ENCODE measurements at regions of chr20 and their contacts with region 1.

Region 1: GRCh38 chr20:7859356-7859802 is 80.9 kb downstream of the HAO1 start:
- DNase-seq: peak; percentile 30
- H3K4me3 ChIP-seq: no peak overlapping the region; a peak in 1 of 4 replicates
- H3K27ac ChIP-seq: no peak overlapping the region
- H3K4me1 ChIP-seq: peaks cover 0 to 9% of the 10 kb centered on the region in 2 experiments; a peak in 3 of 4 replicates
- H3K27me3 ChIP-seq: no peaks in the 10 kb centered on the region
- CTCF ChIP-seq: peak; percentile 86
- EP300 ChIP-seq: no peak
- RAD21 ChIP-seq: peak; percentile 81

Region 2: DNA sequence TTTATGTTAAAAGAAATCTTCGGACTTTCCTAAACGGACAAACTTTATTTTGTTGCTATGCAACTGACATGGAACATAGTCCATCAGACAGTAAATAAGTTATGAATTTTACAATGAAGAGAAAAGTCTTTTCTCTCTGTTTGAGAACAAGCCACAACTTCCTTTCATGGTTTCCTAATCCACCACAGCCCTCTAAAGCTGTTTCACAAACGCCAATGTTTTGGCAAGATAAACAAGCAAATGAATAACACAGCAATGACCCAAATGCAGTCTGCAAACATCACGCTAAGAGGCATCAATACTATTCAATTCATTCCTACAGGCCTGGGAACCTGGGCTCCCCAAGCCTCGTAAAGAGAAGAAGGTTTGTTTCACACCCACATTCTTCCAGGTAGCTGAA is 20.5 kb after region 1 on chr20:
- CTCF ChIA-PET with region 1: interaction called, 18 read pairs
- POLR2A ChIA-PET with region 1: no interaction called
- DNase-seq: no peak
- H3K4me3 ChIP-seq: no peak overlapping the region
- H3K27ac ChIP-seq: no peak overlapping the region
- H3K4me1 ChIP-seq: no peaks in the 10 kb centered on the region
- H3K27me3 ChIP-seq: peaks cover 5% of the 10 kb centered on the region; the same call in 1 of the 2 replicates
- CTCF ChIP-seq: no peak
- EP300 ChIP-seq: no peak
- RAD21 ChIP-seq: no peak

Region 3: GRCh38 chr20:7924692-7925091 is 65.3 kb after region 1 on chr20:
- CTCF ChIA-PET with region 1: no interaction called
- POLR2A ChIA-PET with region 1: no interaction called
- DNase-seq: no peak
- H3K4me3 ChIP-seq: no peak overlapping the region
- H3K27ac ChIP-seq: no peak overlapping the region; a peak in 1 of 4 replicates
- H3K4me1 ChIP-seq: peaks cover 0 to 11% of the 10 kb centered on the region in 2 experiments; a peak in 1 of 4 replicates
- H3K27me3 ChIP-seq: no peaks in the 10 kb centered on the region
- CTCF ChIP-seq: no peak
- EP300 ChIP-seq: 0 out of 4 replicates have a peak, but pooled peaks of 1 of the 2 experiments have one; percentile 13
- RAD21 ChIP-seq: no peak

Region 4: DNA sequence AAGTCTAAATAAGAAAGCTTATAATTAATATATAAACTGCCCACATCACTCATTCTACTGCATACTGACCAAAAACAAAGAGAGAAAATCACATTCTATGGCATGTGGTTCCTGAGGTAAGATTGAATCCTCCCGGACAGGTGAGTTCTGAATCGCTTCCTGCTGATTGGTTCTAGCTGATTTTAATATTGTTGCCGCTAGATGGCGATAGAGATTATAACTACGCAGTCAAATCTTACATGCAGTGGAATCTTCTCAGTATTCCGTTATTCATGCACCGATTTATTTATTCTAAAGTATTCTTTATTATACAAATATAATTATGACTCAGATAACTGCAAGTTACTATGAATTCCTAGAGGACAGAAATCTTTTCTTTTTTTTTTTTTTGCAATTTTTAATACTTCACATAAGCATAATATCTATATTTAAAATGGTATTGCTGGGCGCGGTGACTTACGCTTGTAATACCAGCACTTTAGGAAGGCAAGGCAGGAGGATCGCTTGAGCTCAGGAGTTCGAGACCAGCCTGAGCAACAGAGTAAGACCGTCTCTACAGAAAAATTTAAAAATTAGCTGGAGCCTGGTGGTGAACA is 184.4 kb after region 1 on chr20:
- CTCF ChIA-PET with region 1: no interaction called
- POLR2A ChIA-PET with region 1: no interaction called
- DNase-seq: peak; percentile 44
- H3K4me3 ChIP-seq: no peak overlapping the region
- H3K27ac ChIP-seq: no peak overlapping the region
- H3K4me1 ChIP-seq: peaks cover 0 to 6% of the 10 kb centered on the region in 2 experiments; a peak in 2 of 4 replicates
- H3K27me3 ChIP-seq: no peaks in the 10 kb centered on the region
- CTCF ChIP-seq: peak; percentile 81
- EP300 ChIP-seq: no peak
- RAD21 ChIP-seq: peak; percentile 83

Measured in SK-N-SH (cell line).